Pancreas (tissue), 10 donors: ENCODE measurements at regions of chr11 and their contacts with region 1.

Region 1: GRCh38 chr11:8566613-8567210 is 27.3 kb downstream of the STK33 start:
- DNase-seq: no peak
- ATAC-seq: peak; percentile 58 to 84 (median 80)
- H3K4me3 ChIP-seq: no peak overlapping the region
- H3K27ac ChIP-seq: no peak overlapping the region
- H3K4me1 ChIP-seq: no peaks in the 10 kb centered on the region
- H3K27me3 ChIP-seq: no peaks in the 10 kb centered on the region
- CTCF ChIP-seq: peak; percentile 39 to 60 (median 58)

Region 2: GRCh38 chr11:7364660-7365059 is 1202.1 kb before region 1 on chr11:
- intact Hi-C with region 1: no loop called
- DNase-seq: no peak
- ATAC-seq: no peak
- H3K4me3 ChIP-seq: no peak overlapping the region
- H3K27ac ChIP-seq: no peak overlapping the region
- H3K4me1 ChIP-seq: no peaks in the 10 kb centered on the region
- H3K27me3 ChIP-seq: no peaks in the 10 kb centered on the region
- CTCF ChIP-seq: no peak

Region 3: DNA sequence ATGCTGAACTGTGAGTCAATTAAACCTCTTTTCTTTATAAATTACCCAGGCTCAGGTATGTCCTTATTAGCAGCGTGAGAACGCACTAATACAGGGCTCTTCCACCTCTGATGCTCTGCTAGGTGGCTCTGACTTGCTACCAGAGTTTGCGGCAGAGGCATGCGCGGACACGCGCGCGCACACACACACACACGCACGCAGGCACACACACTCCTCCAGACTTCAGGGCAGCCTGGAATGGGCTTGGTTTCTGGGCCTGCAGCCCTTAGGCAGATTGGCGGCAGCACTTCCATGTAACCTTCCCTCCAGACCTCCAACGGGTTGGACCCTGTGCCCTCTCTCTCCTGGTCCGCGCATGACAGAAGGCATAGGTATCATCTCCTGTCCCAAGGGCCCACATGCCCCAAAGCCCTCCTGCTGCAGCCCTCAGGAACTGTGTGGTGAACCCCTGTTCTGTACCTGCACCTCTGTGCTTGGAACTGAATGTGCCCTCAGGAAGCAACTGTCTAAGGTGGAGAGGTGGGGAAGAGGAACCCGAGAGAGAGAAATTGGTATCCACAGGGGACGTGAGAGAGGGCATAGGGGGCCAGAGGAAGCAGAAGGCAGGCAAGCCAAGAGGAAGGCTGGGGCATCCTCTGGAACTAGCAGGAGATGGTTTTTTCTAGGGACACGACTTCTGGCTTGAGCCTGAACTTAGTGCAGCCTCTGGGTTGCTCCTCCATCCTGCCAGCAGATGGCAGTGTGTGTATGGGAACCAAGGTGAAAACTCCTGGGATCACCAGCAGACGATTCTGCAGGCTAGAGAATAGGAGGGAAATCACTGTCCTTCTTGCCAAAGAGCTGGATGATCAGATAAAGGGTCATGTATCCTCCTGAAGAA is 374.5 kb before region 1 on chr11:
- intact Hi-C with region 1: loop called in 1 of 3 experiments (anchors 10 kb)
- DNase-seq: peak in 5 of 6 donors; percentile 37 to 78 (median 68)
- ATAC-seq: peak; percentile 83 to 97 (median 96)
- H3K4me3 ChIP-seq: no peak overlapping the region
- H3K27ac ChIP-seq: no peak overlapping the region
- H3K4me1 ChIP-seq: no peaks in the 10 kb centered on the region
- H3K27me3 ChIP-seq: peaks cover 0 to 2% (median 0%) of the 10 kb centered on the region in 4 donors
- CTCF ChIP-seq: peak; percentile 76 to 87 (median 80)

Region 4: GRCh38 chr11:8225589-8226036 is 341.1 kb before region 1 on chr11:
- intact Hi-C with region 1: loop called in 2 of 3 experiments (anchors 10 kb)
- DNase-seq: peak; percentile 49 to 88 (median 77)
- ATAC-seq: peak; percentile 25 to 71 (median 68)
- H3K4me3 ChIP-seq: no peak overlapping the region
- H3K27ac ChIP-seq: no peak overlapping the region
- H3K4me1 ChIP-seq: no peaks in the 10 kb centered on the region
- H3K27me3 ChIP-seq: no peaks in the 10 kb centered on the region
- CTCF ChIP-seq: peak; percentile 91 to 96 (median 95)

Region 5: GRCh38 chr11:8338138-8338537 is 228.6 kb before region 1 on chr11:
- intact Hi-C with region 1: loop called in 2 of 3 experiments (anchors 10 kb)
- DNase-seq: peak in 4 of 6 donors; percentile 23 to 87 (median 54)
- ATAC-seq: peak; percentile 58 to 92 (median 88)
- H3K4me3 ChIP-seq: no peak overlapping the region
- H3K27ac ChIP-seq: no peak overlapping the region
- H3K4me1 ChIP-seq: no peaks in the 10 kb centered on the region
- H3K27me3 ChIP-seq: no peaks in the 10 kb centered on the region
- CTCF ChIP-seq: peak; percentile 42 to 64 (median 56)

Region 6: GRCh38 chr11:8688414-8689362 is 122.0 kb after region 1 on chr11:
- intact Hi-C with region 1: no loop called
- DNase-seq: peak; percentile 93 to 97 (median 95)
- ATAC-seq: peak; percentile 96 to 98 (median 97)
- H3K4me3 ChIP-seq: peak overlapping the region; percentile 32 to 67 (median 39)
- H3K27ac ChIP-seq: peak overlapping the region; percentile 50 to 77 (median 65)
- H3K4me1 ChIP-seq: peaks cover 17 to 40% (median 21%) of the 10 kb centered on the region in 3 donors
- H3K27me3 ChIP-seq: no peaks in the 10 kb centered on the region
- CTCF ChIP-seq: no peak